ENCODE measurements at regions of chr14 and their contacts with region 1.

Region 1: GRCh38 chr14:104932676-104933631 is 8.3 kb downstream of the PLD4 start:
- DNase-seq: peak; percentile 92
- ATAC-seq: peak; percentile 84

Region 2: DNA sequence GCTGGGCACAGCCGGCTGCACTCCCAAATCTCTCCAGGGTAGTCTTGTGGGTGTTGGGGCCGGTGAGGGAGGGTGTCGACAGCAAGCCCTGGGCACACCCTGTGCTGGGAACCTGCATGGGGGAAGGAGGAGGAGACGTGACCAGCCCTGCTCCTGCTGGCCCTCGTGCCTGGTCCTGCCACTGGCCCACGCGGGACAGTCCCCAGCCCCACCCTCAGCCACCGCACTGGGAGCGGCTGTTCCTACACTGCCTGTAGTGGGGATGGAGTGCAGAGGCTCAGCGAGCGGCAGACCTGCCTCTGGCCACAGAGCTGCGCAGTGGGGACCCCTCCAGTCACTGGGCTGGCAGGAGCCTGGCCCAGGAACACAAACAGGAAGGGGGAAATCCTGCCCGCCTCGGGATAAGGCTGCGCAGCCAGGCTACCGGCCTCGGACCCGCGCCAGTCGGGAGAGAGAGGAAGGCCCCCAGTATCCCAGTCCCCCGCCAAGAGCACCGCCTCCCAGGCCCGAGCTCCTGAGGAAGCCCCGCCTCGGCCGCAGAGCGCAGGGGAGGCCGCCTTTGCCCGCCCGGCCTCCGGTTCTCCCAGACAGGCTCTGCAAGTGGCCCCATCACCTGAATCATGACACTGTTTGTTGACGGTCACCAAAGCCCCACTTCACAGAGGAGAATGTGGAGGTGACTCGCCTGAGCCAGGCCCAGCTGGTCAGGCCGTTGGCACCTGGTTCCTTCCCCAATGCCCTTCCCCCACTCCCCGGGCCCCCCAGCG is 34.6 kb after region 1 on chr14:
- intact Hi-C with region 1: loop called (anchors 2 kb)
- DNase-seq: peak; percentile 70
- ATAC-seq: peak; percentile 51

Region 3: GRCh38 chr14:104978340-104978653 is 45.3 kb after region 1 on chr14 and contains the start of gene AHNAK2:
- intact Hi-C with region 1: no loop called
- DNase-seq: peak; percentile 90
- ATAC-seq: peak; percentile 78
- total RNA-seq, gene AHNAK2: 2.5 TPM